Endothelial cell of umbilical vein (primary cell): ENCODE measurements at regions of chr11 and their contacts with region 1.

Region 1: DNA sequence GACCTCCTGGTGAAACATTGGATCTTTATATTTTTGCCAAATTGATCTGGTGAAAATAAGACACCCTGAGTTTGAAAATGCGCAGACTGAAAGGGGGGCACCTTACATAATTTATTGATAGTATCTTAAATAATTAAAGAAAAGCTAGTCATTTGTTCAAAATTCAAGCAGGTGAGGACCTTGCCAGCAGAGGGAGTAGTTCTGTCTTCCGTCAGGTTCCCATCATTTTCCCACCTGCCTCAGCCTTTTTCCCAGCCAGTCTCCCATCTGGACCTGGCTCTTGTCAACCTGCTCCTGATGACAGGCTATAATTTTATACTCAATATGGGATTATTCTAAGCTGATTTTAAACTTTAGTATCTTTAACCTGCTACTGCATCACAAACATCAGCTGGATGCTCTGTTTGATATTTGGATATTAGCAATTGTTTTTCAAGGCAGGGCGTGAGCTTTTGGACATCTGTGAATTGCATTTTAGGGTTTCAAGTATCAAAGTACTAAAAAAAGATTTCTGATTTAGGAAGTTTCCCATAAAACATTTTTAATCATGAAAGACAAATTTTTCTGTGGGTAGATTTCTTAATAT is 132.0 kb downstream of the ELP4 start:
- DNase-seq: peak; percentile 41
- H3K4me3 ChIP-seq: no peak overlapping the region
- H3K27ac ChIP-seq: no peak overlapping the region
- H3K4me1 ChIP-seq: peaks cover 7% of the 10 kb centered on the region
- H3K27me3 ChIP-seq: no peaks in the 10 kb centered on the region
- CTCF ChIP-seq: peak; percentile 56 to 59
- POLR2A ChIP-seq: no peak

Region 2: GRCh38 chr11:31375879-31376278 is 265.7 kb before region 1 on chr11:
- CTCF ChIA-PET with region 1: no interaction called
- POLR2A ChIA-PET with region 1: no interaction called
- dilution Hi-C with region 1: no loop called
- intact Hi-C with region 1: no loop called
- DNase-seq: no peak
- H3K4me3 ChIP-seq: no peak overlapping the region
- H3K27ac ChIP-seq: no peak overlapping the region
- H3K4me1 ChIP-seq: no peaks in the 10 kb centered on the region
- H3K27me3 ChIP-seq: no peaks in the 10 kb centered on the region
- CTCF ChIP-seq: no peak
- POLR2A ChIP-seq: no peak

Region 3: DNA sequence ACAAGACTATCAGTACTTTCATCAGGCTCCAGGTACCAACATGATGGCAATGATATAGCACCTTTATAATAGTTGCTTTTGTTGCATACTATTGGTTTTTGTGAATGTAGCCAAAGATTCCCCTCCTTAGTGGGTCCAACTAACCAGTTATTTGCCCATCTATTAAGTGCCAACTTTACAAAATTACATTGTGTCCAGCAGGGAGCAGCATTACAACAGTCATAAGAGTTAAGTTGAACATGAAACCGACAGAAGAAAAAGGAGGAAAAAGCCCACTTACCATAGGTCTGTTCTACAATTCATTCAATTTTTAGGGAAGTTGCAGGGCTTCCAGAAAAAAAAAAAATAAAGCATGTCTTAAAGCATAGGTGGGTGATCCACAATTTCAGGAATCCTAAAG is 153.7 kb before region 1 on chr11:
- CTCF ChIA-PET with region 1: interaction called, 8 read pairs
- POLR2A ChIA-PET with region 1: no interaction called
- dilution Hi-C with region 1: no loop called
- intact Hi-C with region 1: loop called (anchors 5 kb)
- DNase-seq: peak; percentile 74
- H3K4me3 ChIP-seq: no peak overlapping the region
- H3K27ac ChIP-seq: no peak overlapping the region
- H3K4me1 ChIP-seq: no peaks in the 10 kb centered on the region
- H3K27me3 ChIP-seq: no peaks in the 10 kb centered on the region
- CTCF ChIP-seq: peak; percentile 24 to 28
- POLR2A ChIP-seq: no peak

Region 4: DNA sequence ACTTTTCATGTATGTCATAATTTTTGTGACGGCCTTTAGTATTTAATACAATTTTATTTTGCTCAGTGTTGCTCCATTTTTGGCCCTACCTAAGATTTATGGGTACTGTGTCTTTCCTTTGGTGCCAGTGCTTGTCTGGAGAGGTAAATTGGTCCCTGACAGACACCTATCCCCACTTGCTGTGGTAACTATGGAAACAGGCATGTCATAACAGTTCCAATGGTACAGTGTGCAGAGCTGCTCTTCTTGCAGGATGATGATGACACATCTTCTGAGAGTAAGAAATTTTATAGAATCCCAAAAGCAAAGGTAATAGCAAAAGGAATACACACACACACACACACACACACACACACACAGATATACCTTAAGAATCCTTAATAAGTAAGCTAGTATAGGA is 13.5 kb before region 1 on chr11:
- CTCF ChIA-PET with region 1: interaction called, 52 read pairs
- POLR2A ChIA-PET with region 1: no interaction called
- dilution Hi-C with region 1: no loop called
- intact Hi-C with region 1: no loop called
- DNase-seq: no peak
- H3K4me3 ChIP-seq: no peak overlapping the region
- H3K27ac ChIP-seq: no peak overlapping the region
- H3K4me1 ChIP-seq: no peaks in the 10 kb centered on the region
- H3K27me3 ChIP-seq: no peaks in the 10 kb centered on the region
- CTCF ChIP-seq: no peak
- POLR2A ChIP-seq: no peak

Region 5: GRCh38 chr11:31664129-31664528 is 22.6 kb after region 1 on chr11:
- CTCF ChIA-PET with region 1: interaction called, 27 read pairs
- POLR2A ChIA-PET with region 1: no interaction called
- dilution Hi-C with region 1: no loop called
- intact Hi-C with region 1: loop called (anchors 2 kb)
- DNase-seq: no peak
- H3K4me3 ChIP-seq: no peak overlapping the region
- H3K27ac ChIP-seq: no peak overlapping the region
- H3K4me1 ChIP-seq: no peaks in the 10 kb centered on the region
- H3K27me3 ChIP-seq: no peaks in the 10 kb centered on the region
- CTCF ChIP-seq: no peak
- POLR2A ChIP-seq: no peak

Region 6: DNA sequence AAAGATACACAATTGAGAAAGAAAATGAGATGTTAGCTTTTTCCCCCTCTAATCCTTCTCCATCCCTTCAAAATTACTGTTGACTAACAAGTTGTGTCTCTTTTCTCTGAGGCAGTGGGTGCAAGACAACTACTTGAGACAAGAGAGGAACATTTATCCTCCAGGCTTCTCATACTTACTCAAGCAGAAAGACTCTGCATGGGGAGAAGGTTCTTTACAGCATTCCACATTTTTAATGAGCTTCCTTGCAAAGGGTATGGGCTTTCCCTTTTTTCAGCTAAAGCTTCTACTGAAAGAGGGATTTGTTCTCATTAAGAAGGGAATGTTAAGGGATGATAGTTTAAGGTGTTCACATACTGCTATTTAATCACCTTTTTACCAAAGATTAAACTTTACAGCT is 121.7 kb after region 1 on chr11:
- CTCF ChIA-PET with region 1: interaction called, 10 read pairs
- POLR2A ChIA-PET with region 1: no interaction called
- dilution Hi-C with region 1: no loop called
- intact Hi-C with region 1: no loop called
- DNase-seq: no peak
- H3K4me3 ChIP-seq: no peak overlapping the region
- H3K27ac ChIP-seq: no peak overlapping the region
- H3K4me1 ChIP-seq: no peaks in the 10 kb centered on the region
- H3K27me3 ChIP-seq: no peaks in the 10 kb centered on the region
- CTCF ChIP-seq: no peak
- POLR2A ChIP-seq: no peak

Region 7: DNA sequence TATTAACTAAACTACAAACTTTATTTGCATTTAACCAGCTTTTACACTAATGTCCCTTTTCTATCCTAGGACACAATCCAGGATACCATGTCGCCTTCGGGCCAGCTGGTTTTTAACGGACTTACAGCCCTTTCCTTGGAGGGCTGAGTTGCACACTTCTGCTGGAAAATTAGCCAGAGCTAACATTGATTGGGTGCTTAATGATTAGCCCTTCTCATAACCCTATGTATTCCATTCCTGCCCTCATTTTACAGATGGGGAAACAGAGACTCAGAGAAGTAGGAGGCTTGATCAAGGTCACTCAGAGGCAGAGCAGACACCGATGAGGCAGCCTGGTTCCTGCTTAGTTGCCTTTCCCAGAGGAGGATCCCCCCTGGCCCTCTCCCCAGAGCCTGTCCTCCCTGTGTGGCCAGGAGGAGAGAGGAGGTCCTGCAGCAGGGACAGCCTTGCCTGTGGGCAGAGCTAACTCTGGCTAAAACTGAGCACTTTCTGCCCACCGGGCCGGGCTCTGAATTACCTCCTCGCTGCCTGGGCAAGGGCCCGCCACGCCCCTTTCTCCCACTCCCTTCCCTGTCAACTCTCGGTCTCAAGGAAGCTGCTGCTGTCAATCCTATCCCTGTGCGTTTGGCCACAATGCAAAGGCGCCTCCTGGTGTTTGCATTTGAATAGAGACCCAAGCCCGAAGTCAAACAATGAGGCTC is 229.2 kb after region 1 on chr11:
- CTCF ChIA-PET with region 1: interaction called, 50 read pairs
- POLR2A ChIA-PET with region 1: no interaction called
- dilution Hi-C with region 1: no loop called
- intact Hi-C with region 1: loop called (anchors 1 kb)
- DNase-seq: peak; percentile 62
- H3K4me3 ChIP-seq: no peak overlapping the region
- H3K27ac ChIP-seq: no peak overlapping the region
- H3K4me1 ChIP-seq: no peaks in the 10 kb centered on the region
- H3K27me3 ChIP-seq: peaks cover 4 to 12% of the 10 kb centered on the region in 2 experiments
- CTCF ChIP-seq: peak; percentile 43 to 76
- POLR2A ChIP-seq: no peak